Activated T-helper 2 cell treated with anti-CD3 and anti-CD28 coated beads, Interferon-gamma antibody, Interleukin-2, Interleukin-4, amounts not matched to agents 10 μg/mL and 5 μg/mL and 100 μg/mL, durations not matched to agents 14 hours and 24 hours and 36 hours (primary cell): ENCODE measurements at regions of chr12 and their contacts with region 1.

Region 1: GRCh38 chr12:75738486-75738885 is 227.1 kb upstream of the KRR1 start:
- DNase-seq: no peak
- H3K4me3 Mint-ChIP-seq: no peak overlapping the region
- H3K27ac Mint-ChIP-seq: peak overlapping the region; percentile 33
- H3K4me1 Mint-ChIP-seq: peaks cover 20% of the 10 kb centered on the region
- H3K27me3 Mint-ChIP-seq: peaks cover 23% of the 10 kb centered on the region

Region 2: DNA sequence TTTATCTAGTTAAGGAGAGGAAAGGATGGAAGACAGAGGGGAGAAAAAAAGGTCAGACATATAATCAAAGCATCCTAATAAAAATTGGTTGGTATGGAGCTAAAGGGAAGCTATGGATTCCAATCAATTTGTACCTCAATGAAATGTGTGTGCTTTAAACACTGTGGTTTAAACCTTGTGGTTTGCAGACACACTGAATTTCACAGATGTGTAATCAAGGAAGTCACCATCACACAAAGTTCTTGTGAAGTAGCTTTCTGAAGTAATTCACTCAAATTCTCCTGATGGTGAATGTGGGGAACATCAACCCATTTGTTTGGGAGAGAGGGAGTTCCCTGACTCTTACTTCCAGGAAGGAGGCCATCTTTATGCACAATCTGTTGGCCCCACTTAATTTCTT is 16.2 kb after region 1 on chr12:
- intact Hi-C with region 1: loop called (anchors 2 kb)
- DNase-seq: no peak
- H3K4me3 Mint-ChIP-seq: no peak overlapping the region
- H3K27ac Mint-ChIP-seq: no peak overlapping the region
- H3K4me1 Mint-ChIP-seq: peaks cover 19% of the 10 kb centered on the region
- H3K27me3 Mint-ChIP-seq: peaks cover 16% of the 10 kb centered on the region

Region 3: DNA sequence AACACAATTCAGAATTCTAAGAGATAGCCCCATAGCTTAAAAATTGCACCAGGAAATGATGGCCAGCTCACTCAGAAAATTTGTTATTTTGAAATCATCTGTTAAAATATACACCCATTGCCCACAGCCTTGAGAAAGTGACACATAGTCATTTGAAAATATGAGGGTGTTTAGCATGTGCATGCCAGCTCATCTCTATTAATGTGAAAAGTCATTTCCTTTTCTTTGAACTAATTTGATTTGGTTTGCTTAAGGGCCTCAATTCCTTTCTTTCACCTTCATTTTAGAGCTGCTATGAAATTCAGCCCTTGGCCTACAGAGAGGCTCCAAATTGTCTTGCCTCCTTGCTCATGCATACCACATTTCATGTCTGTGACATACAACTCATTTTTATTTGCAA is 51.7 kb after region 1 on chr12:
- intact Hi-C with region 1: no loop called
- DNase-seq: no peak
- H3K4me3 Mint-ChIP-seq: no peak overlapping the region
- H3K27ac Mint-ChIP-seq: no peak overlapping the region
- H3K4me1 Mint-ChIP-seq: peaks cover 16% of the 10 kb centered on the region
- H3K27me3 Mint-ChIP-seq: peaks cover 21% of the 10 kb centered on the region